Dendritic cell treated with granulocyte-macrophage colony-stimulating factor and Interleukin-4, amounts not matched to agents 40 ng/mL and 50 ng/mL, for 4 days (primary cell): ENCODE measurements at regions of chr20 and their contacts with region 1.

Region 1: DNA sequence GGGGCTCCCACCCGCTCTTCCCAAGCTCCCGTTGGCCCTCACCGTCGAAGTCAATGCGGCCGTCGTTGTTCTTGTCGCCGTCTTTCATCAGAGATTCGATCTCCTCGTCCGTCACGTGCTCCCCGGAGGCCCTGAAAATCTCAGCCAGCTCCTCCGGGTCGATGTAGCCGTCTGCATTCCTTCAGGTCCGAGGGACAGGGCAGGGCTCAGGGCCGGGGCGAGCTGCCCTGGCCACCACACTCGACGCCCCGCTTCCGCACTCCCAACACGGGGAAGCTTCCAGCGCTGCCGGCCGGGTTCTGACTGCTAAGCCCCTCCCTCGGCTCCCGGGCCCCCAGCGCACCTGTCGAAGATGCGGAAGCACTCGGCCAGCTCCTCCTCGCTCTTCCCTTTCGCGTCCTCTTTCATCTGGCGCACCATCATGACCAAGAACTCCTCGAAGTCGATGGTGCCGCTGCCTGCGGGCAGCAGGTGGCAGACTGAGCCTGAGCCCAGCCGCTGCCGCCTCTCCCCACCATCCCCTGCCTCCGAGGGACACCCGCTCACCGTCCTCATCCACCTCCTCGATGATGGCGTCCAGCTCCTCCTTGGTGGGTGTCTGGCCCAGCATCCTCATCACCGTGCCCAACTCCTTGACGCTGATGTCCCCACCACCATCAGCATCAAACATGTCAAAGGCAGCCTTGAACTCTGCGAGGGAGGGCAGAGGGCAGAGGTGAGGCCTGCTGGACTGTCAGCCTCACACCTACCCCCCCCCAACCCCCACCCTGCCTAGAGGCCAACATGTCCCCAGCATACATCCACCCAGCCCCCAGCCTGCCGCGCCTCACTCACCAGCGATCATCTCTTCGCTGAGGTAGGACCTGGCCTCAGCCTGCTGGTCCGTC is 2.9 kb downstream of the TNNC2 start:
- H3K4me3 Mint-ChIP-seq: peak overlapping the region; percentile 64
- H3K27ac Mint-ChIP-seq: peak overlapping the region; percentile 8
- H3K4me1 Mint-ChIP-seq: peaks cover 28% of the 10 kb centered on the region
- H3K27me3 Mint-ChIP-seq: peaks cover 39% of the 10 kb centered on the region

Region 2: DNA sequence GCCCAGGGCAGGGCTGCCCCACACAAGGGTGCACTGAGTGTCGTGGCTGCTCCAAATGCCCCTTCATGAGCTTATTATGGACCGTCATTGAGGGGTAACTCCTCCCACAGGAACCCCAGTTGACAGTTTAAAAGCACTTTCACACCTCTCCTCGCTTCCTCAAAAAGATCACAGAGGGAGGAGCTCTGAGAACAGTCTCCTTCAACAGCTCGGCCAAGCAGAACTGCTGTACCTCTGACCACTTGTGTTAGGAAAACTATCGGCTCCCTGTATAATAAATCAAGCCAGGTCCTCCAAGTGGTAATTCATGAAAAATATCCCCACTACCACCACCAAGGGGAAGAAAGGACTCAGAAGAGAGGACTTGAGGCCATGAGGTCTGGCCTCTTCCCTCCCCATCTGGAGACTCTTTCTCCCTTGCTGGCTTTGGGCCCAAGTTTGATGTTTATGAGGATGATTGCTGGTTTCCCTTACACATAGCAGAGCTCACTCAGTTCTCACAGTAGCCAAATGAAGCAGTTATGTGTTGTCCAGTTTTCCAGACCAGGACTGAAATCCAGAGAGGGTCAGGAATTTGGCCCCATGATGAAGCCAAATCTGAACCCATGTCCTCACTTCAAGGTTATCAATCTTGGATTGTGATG is 18.1 kb after region 1 on chr20:
- intact Hi-C with region 1: no loop called
- H3K4me3 Mint-ChIP-seq: no peak overlapping the region
- H3K27ac Mint-ChIP-seq: no peak overlapping the region
- H3K4me1 Mint-ChIP-seq: peaks cover 28% of the 10 kb centered on the region
- H3K27me3 Mint-ChIP-seq: no peaks in the 10 kb centered on the region

Region 3: GRCh38 chr20:45857882-45858216 is 33.7 kb after region 1 on chr20:
- intact Hi-C with region 1: no loop called
- H3K4me3 Mint-ChIP-seq: peak overlapping the region; percentile 91
- H3K27ac Mint-ChIP-seq: peak overlapping the region; percentile 96
- H3K4me1 Mint-ChIP-seq: peaks cover 59% of the 10 kb centered on the region
- H3K27me3 Mint-ChIP-seq: no peaks in the 10 kb centered on the region

Region 4: DNA sequence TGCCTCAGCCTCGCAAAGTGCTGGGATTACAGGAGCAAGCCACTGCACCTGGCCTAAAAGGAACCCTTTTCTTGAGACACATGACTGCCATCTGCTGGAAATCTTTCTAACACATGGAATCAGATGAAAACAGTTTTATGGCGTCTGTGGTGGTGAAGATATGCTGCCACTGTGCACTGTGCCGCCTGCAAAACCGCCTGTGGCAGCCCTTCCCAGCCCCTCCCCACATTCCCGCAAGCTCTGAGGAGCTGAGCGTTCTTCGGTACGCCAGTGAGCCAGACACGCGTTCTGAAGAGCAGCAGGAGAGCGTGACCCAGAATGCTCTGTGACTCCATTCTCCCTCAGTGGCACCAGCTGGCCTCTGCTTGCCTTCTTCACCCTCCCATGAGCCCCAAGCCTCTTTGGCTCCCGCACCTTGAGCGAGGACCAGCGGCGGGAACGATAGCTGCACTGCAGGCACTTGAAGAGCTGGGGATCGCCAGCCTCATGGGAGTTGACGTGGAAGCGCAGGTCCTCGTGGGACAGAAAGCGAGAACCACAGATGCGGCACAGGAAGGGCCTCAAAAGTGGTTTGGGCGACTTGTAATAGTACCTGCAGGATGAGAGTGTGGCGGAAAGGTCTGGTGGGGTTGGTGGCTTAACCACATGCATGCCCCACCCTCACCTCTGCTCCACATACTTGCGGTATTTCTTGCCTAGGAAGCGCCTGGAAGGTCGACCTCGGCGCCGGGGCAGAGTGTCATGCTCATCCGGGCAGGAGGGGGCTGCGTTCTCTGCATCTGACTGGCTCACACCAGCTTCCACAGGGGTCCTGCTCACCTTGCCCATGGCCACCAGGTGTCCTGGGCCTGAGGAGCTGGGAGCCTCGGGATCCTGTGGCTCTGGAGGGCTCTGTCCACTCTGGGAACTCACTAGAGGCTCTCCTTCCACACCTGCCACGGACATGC is 139.1 kb after region 1 on chr20:
- intact Hi-C with region 1: loop called (anchors 1 kb)
- H3K4me3 Mint-ChIP-seq: no peak overlapping the region
- H3K27ac Mint-ChIP-seq: peak overlapping the region; percentile 10
- H3K4me1 Mint-ChIP-seq: peaks cover 5% of the 10 kb centered on the region
- H3K27me3 Mint-ChIP-seq: no peaks in the 10 kb centered on the region